GM12878 (cell line): ENCODE measurements at regions of chr16 and their contacts with region 1.

Region 1: DNA sequence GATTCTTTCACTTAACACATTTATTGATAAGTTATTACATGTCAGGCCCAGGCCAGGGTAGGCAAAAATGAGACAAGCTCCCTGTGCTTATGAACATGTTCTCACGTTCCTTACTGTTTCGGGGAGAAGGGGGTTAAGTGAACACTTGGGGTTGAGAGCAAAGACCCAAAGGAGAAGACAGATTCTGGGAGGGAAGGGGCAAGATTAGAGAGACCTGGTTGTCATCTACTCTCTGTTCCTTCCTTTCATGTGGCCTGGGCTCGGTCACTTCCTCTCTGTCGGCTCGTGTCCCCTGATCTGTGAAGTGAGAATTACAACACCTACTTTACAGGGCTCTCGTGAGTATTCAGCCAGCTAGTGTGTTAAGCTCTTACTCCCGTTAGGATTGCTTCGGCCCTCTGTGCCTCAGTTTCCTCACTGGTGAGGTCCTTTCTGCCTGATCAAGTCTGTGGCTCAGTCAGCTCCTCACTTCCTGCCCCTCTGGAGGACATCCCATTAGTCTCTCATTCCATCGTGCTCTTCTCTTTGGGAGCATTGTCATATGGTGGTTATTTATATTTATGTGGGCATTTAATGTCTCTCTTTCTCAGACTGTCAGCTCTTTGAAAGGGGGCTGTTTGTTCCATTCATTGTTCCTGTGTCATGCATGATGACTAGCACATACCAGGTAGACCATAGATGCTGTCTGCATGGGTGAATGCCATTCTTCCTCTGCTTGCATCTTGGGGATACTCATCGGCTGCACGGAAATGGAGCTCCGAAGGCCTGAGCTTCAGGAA is 38.9 kb downstream of the PLCG2 start:
- DNase-seq: peak; percentile 79
- ATAC-seq: peak; percentile 68
- H3K4me3 ChIP-seq: peak overlapping the region; percentile 38; the same call in 1 of the 2 replicates
- H3K27ac ChIP-seq: peak overlapping the region; percentile 98
- H3K4me1 ChIP-seq: peaks cover 85% of the 10 kb centered on the region
- H3K27me3 ChIP-seq: no peaks in the 10 kb centered on the region
- CTCF ChIP-seq: no peak
- EP300 ChIP-seq: peak; percentile 18 to 79; a peak in 3 of 4 replicates
- POLR2A ChIP-seq: peak; percentile 58
- RAD21 ChIP-seq: no peak; the same call in 1 of the 2 replicates

Region 2: DNA sequence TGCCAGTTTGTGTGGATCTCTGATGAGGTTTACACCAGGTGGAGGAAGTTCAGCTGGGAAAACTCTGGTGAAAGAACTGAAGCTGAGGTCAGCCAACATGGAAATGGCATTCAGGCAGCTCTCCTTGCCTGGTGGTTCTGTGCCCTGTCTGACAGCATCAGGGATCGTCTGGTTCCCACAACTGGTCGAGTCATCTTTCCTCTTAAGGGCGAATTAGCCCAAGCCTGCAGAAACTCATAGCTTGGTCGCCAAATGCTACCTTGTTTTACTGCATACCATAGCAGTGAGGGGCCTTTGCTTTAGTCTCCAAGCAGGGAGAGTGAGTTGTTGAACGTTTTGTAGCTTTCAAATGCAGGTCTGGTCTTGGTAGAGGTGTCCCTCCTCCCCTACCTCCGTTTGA is 31.7 kb before region 1 on chr16:
- CTCF ChIA-PET with region 1: interaction called, 8 read pairs
- POLR2A ChIA-PET with region 1: interaction called, 46 read pairs
- RAD21 ChIA-PET with region 1: interaction called, 67 read pairs
- SMC1A ChIA-PET with region 1: interaction called, 58 read pairs
- in situ Hi-C with region 1: no loop called
- intact Hi-C with region 1: loop called (anchors 2 kb)
- DNase-seq: no peak
- ATAC-seq: no peak
- H3K4me3 ChIP-seq: peak overlapping the region; percentile 75
- H3K27ac ChIP-seq: peak overlapping the region; percentile 60
- H3K4me1 ChIP-seq: peaks cover 42% of the 10 kb centered on the region
- H3K27me3 ChIP-seq: no peaks in the 10 kb centered on the region
- CTCF ChIP-seq: no peak
- EP300 ChIP-seq: no peak
- POLR2A ChIP-seq: no peak
- RAD21 ChIP-seq: no peak

Region 3: GRCh38 chr16:81831722-81832126 is 13.7 kb after region 1 on chr16:
- CTCF ChIA-PET with region 1: interaction called, 5 read pairs
- POLR2A ChIA-PET with region 1: interaction called, 13 read pairs
- RAD21 ChIA-PET with region 1: interaction called, 32 read pairs
- SMC1A ChIA-PET with region 1: interaction called, 135 read pairs
- in situ Hi-C with region 1: no loop called
- intact Hi-C with region 1: loop called (anchors 2 kb)
- DNase-seq: peak; percentile 82
- ATAC-seq: peak; percentile 91
- H3K4me3 ChIP-seq: peak overlapping the region; percentile 64
- H3K27ac ChIP-seq: peak overlapping the region; percentile 95
- H3K4me1 ChIP-seq: peaks cover 87% of the 10 kb centered on the region
- H3K27me3 ChIP-seq: no peaks in the 10 kb centered on the region
- CTCF ChIP-seq: peak; percentile 20 to 60 (median 55); a peak in 5 of 6 replicates
- EP300 ChIP-seq: 0 out of 4 replicates have a peak, but pooled peaks have one; percentile 25 to 56
- POLR2A ChIP-seq: peak; percentile 77
- RAD21 ChIP-seq: peak; percentile 42

Region 4: GRCh38 chr16:81850197-81850944 is 32.4 kb after region 1 on chr16:
- CTCF ChIA-PET with region 1: interaction called, 4 read pairs
- POLR2A ChIA-PET with region 1: interaction called, 3 read pairs
- RAD21 ChIA-PET with region 1: interaction called, 4 read pairs
- SMC1A ChIA-PET with region 1: interaction called, 10 read pairs
- in situ Hi-C with region 1: no loop called
- intact Hi-C with region 1: no loop called
- DNase-seq: no peak
- ATAC-seq: no peak
- H3K4me3 ChIP-seq: no peak overlapping the region
- H3K27ac ChIP-seq: no peak overlapping the region
- H3K4me1 ChIP-seq: no peaks in the 10 kb centered on the region; the same call in 1 of the 2 replicates
- H3K27me3 ChIP-seq: no peaks in the 10 kb centered on the region
- CTCF ChIP-seq: no peak
- EP300 ChIP-seq: no peak
- POLR2A ChIP-seq: no peak
- RAD21 ChIP-seq: no peak